Right ventricle myocardium superior (tissue), 1 donor: ENCODE measurements at regions of chr2 and their contacts with region 1.

Region 1: GRCh38 chr2:68362069-68362468 is 3.0 kb upstream of the PLEK start:
- DNase-seq: peak; percentile 87
- ATAC-seq: peak; percentile 86

Region 2: DNA sequence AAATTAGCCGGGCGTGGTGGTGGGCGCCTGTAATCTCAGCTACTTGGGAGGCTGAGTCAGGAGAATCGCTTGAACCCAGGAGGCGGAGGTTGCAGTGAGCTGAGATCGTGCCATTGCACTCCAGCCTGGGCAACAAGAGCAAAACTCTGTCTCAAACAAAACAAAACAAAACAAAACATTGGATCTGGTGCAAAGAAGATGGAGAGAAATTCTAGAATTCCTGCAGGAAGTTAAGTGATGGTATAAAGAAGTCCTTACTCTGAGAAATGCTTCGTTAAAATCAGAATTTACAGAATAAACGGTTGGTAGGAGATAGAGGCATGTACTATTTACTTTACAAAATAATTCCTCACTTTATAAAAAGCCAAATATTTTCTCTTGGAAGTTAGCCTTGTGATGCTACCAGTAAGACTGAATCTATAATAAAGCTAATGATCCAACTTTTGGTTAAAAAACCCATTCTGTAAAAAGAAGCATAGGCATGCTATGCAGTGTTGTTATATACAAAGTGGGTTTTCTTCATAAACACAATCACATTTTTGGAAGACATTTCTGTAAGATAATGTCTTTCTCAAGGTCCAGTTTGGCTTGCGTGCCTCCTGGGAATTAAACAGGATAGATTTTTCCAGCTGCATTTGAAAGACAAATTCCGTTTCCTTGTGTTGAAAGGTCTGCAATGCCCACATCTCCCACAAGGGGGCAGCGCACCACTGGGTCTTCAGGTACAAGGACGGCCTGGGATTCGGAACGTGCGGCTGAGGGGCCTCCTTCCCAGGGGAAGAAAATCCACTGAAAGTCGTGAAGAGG is 240.0 kb before region 1 on chr2:
- intact Hi-C with region 1: loop called (anchors 5 kb)
- DNase-seq: peak; percentile 92
- ATAC-seq: peak; percentile 89

Region 3: DNA sequence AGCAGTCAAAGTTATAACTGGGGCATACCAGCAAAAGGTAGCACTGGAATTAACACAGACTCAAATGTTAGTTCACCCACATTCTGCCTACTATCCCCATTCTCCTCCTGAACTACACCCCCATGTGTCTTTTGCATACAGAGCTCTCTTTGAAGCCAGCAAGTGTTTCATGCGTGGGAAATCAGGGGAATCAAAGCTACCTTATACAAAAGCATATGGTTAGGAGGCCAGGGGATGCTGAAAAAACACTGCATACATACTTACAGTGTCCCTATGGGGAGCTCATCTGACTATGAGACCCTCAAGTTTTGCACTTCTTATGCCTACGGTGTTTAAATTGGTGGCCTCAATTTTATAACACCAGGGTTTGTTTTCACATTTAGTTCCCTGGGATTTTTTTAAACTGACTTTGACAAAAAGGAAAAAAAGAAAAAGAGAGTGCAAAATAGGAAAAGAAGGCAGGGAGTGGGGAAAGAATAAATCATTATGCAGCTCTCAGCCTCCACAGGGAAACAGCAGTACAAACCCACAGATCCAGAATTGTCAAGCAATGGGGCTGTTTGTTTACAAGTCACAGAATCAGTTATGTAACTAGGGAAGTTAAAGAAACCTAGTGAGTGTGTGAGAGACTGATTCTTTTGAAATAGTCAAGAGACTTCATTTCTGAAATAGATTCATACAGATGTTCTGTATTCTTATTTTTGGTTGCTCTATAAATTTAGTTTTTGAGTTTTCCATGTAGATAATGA is 89.6 kb before region 1 on chr2:
- intact Hi-C with region 1: no loop called
- DNase-seq: no peak
- ATAC-seq: peak; percentile 69